ENCODE measurements at regions of chr12 and their contacts with region 1.

Region 1: GRCh38 chr12:38291160-38291559 is 25.4 kb upstream of the ALG10B start:
- DNase-seq: no peak
- ATAC-seq: no peak
- H3K4me3 ChIP-seq: no peak overlapping the region
- H3K27ac ChIP-seq: no peak overlapping the region
- H3K4me1 ChIP-seq: no peaks in the 10 kb centered on the region
- H3K27me3 ChIP-seq: peaks cover 0 to 4% (median 0%) of the 10 kb centered on the region in 9 donors
- CTCF ChIP-seq: no peak
- POLR2A ChIP-seq: no peak

Region 2: GRCh38 chr12:38070857-38071256 is 220.3 kb before region 1 on chr12:
- intact Hi-C with region 1: no loop called
- DNase-seq: no peak
- ATAC-seq: no peak
- H3K4me3 ChIP-seq: no peak overlapping the region
- H3K27ac ChIP-seq: no peak overlapping the region
- H3K4me1 ChIP-seq: no peaks in the 10 kb centered on the region
- H3K27me3 ChIP-seq: no peaks in the 10 kb centered on the region
- CTCF ChIP-seq: no peak
- POLR2A ChIP-seq: no peak

Region 3: DNA sequence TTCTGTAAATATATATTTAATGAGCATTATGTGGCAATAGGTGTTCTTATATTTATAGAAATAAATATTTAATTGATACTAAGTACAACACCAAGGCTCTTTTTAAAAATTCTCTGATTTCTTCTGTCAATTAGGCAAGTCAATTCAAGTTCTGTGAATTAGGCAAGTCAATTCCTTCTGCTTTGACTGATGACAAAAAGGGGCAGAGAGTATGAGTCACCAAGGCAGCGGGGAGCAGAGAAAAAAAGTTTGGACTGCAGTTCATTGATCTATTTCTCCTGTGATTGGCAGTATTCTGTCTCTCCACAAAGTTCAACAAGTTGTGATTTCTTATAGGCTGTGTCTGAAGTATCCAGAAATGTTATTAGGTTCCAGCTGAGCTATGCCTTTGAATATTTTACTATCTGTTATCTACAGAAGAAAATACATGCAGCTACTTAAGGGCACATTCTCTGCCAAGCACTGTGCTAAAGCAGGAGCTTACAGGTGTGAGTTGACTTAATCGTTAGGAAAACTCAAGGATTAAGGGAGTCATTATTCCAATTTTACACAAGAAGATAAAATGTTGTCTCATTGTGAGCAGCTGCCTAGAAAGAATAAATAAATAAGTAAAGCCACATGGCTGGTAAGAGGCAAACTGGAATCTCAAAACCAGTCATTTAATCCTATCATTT is 181.0 kb before region 1 on chr12:
- intact Hi-C with region 1: no loop called
- DNase-seq: no peak
- ATAC-seq: no peak
- H3K4me3 ChIP-seq: no peak overlapping the region
- H3K27ac ChIP-seq: no peak overlapping the region
- H3K4me1 ChIP-seq: no peaks in the 10 kb centered on the region
- H3K27me3 ChIP-seq: no peaks in the 10 kb centered on the region
- CTCF ChIP-seq: no peak
- POLR2A ChIP-seq: no peak

Region 4: GRCh38 chr12:38149395-38150286 is 141.5 kb before region 1 on chr12:
- intact Hi-C with region 1: loop called in 1 of 10 experiments (anchors 10 kb)
- DNase-seq: no peak
- ATAC-seq: no peak
- H3K4me3 ChIP-seq: no peak overlapping the region
- H3K27ac ChIP-seq: no peak overlapping the region
- H3K4me1 ChIP-seq: no peaks in the 10 kb centered on the region
- H3K27me3 ChIP-seq: no peaks in the 10 kb centered on the region
- CTCF ChIP-seq: no peak
- POLR2A ChIP-seq: no peak

Measured in heart left ventricle (tissue), 16 donors.